Lower leg skin (tissue), 4 donors: ENCODE measurements at regions of chr20 and their contacts with region 1.

Region 1: GRCh38 chr20:45436732-45437391 is 20.9 kb downstream of the PIGT start:
- DNase-seq: peak; percentile 85 to 98
- H3K4me3 ChIP-seq: peak overlapping the region; percentile 6
- CTCF ChIP-seq: peak in 1 of 3 donors; percentile 92
- POLR2A ChIP-seq: no peak

Region 2: DNA sequence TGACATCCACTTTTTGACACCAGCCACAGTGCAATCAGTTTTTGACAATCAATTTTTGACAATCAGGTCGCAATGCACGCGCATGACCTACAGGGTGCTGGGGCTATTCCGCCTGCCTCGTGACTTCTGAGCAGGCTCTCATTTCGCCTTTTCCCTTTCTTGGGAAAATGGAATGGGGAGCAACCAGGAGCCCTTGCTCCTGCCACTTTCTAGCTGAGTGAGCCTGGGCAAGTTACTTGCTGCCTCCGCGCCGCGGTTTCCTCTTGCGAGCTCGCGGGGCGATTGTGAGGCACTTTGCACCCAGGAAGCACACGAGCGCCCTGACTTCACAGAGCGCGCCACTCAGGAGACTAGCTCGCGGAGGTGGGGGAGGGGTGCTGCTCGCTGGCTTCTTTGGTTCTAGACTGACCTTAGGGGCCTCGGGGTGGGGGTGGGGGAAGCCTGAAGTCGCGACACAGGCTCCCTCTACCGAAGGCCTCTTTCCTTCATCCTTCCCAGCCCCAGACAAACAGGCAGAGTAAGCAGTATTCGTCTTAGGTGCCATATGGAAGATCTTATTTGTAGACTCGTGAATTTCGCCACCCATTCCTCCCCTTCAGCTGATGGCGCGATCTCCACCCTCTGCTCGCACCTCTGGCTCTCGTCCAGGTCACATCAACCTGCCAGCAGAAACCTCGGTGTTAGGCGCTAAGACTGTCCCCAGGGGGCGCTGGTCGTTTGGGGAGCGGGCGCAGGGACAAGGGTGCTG is 63.3 kb before region 1 on chr20:
- intact Hi-C with region 1: loop called (anchors 5 kb)
- DNase-seq: peak; percentile 79 to 97
- H3K4me3 ChIP-seq: peak overlapping the region; percentile 24
- CTCF ChIP-seq: peak in 1 of 3 donors; percentile 81
- POLR2A ChIP-seq: no peak